ENCODE measurements at regions of chr12 and their contacts with region 1.

Region 1: GRCh38 chr12:51269174-51270066 is 795 bp downstream of the SMAGP start:
- DNase-seq: peak; percentile 27
- H3K4me3 ChIP-seq: peak overlapping the region; percentile 84
- H3K27ac ChIP-seq: peak overlapping the region; percentile 88
- H3K4me1 ChIP-seq: peaks cover 27% of the 10 kb centered on the region
- H3K27me3 ChIP-seq: peaks cover 33% of the 10 kb centered on the region
- CTCF ChIP-seq: peak; percentile 51

Region 2: DNA sequence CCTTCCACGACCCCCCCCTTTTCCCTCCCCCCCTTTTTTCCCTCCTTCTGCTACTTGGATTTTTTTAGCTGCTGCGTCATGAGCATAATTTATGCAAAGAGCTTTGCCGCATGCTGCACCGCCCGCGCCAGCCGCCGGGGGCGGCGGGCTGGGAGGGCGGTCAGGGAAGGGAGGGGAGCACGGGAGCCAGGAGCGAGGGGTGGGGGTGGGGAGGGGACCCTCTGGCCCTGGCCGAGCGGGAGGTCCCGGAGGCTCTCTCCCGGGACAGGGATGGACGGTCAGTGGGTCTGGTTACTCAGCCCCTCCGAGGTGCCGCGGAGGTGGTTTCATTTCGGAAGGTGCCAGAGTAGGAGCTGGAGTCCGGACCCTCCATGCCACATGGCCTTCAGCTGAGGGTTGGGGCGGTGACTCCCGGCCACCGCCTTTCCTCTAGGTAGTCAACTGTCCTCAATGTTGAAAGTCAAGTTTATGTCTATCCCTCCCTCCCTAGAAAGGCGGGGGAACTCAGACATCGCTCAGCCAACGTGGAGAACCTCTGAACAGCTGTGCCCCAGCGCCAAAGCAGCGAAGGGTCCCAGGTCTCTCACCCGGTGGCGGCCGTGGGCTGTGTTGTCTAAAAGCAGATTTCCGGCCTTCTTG is 51.3 kb before region 1 on chr12 and contains the start of gene POU6F1:
- intact Hi-C with region 1: no loop called
- DNase-seq: peak; percentile 63
- H3K4me3 ChIP-seq: peak within 1 kb of the TSS; percentile 91
- H3K27ac ChIP-seq: peak within 1 kb of the TSS; percentile 96
- H3K4me1 ChIP-seq: peaks cover 31% of the 10 kb centered on the region
- H3K27me3 ChIP-seq: no peaks in the 10 kb centered on the region
- CTCF ChIP-seq: peak; percentile 72
- total RNA-seq, gene POU6F1: 9.9 TPM

Region 3: DNA sequence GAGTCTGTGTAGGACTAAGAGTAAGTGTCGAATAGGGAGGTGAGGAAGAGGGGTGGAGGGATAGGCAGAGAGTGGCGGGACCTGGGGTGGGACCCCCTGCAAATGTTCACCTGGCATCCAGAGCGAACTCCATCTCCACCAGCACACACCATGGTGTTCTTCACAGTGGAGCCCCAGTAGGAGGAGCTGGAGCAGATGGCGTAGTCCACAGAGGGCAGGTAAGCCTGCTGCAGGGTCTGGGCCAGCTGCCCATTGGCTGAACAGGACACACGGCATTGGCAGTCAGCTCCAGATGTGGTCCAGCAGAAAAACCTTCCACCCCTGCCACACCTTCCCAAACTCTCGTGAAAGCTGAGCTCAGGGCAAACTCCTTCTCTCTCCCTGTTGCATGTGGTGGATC is 70.3 kb after region 1 on chr12:
- intact Hi-C with region 1: loop called (anchors 2 kb)
- DNase-seq: no peak
- H3K4me3 ChIP-seq: no peak overlapping the region
- H3K27ac ChIP-seq: no peak overlapping the region
- H3K4me1 ChIP-seq: peaks cover 5% of the 10 kb centered on the region
- H3K27me3 ChIP-seq: peaks cover 10% of the 10 kb centered on the region
- CTCF ChIP-seq: no peak